ENCODE measurements at regions of chr11 and their contacts with region 1.

Region 1: GRCh38 chr11:14413307-14414069 is 54.5 kb upstream of the RRAS2 start:
- DNase-seq: peak in 1 of 2 donors; percentile 59
- ATAC-seq: peak; percentile 57
- H3K4me3 ChIP-seq: no peak overlapping the region
- H3K27ac ChIP-seq: peak overlapping the region; percentile 15 to 29
- H3K4me1 ChIP-seq: peaks cover 2 to 5% of the 10 kb centered on the region in 2 donors
- H3K27me3 ChIP-seq: no peaks in the 10 kb centered on the region

Region 2: DNA sequence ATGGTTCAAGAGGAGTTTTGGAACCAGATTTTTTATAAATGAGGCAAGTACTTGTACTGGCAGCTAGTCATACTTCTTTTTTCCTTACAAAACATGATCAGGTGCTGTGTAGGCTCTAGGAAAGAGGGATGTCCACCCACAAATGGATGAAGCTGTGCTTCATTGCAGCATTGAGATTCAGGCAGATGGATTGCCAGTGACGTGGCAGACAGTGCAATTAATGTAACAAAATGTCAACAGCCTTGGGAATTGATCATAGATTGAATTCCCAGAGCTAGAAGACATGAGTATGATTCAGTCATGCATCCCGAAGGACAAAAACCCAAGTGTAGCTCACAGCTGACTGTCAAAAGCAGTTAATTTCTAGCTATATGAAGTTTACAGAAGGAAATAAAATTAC is 1503.6 kb before region 1 on chr11:
- intact Hi-C with region 1: no loop called
- DNase-seq: no peak
- ATAC-seq: no peak
- H3K4me3 ChIP-seq: no peak overlapping the region
- H3K27ac ChIP-seq: no peak overlapping the region
- H3K4me1 ChIP-seq: no peaks in the 10 kb centered on the region
- H3K27me3 ChIP-seq: no peaks in the 10 kb centered on the region

Region 3: GRCh38 chr11:14336507-14337503 is 76.7 kb before region 1 on chr11:
- intact Hi-C with region 1: no loop called
- DNase-seq: no peak
- ATAC-seq: no peak
- H3K4me3 ChIP-seq: no peak overlapping the region
- H3K27ac ChIP-seq: no peak overlapping the region
- H3K4me1 ChIP-seq: peaks cover 0 to 11% of the 10 kb centered on the region in 2 donors
- H3K27me3 ChIP-seq: no peaks in the 10 kb centered on the region

Region 4: DNA sequence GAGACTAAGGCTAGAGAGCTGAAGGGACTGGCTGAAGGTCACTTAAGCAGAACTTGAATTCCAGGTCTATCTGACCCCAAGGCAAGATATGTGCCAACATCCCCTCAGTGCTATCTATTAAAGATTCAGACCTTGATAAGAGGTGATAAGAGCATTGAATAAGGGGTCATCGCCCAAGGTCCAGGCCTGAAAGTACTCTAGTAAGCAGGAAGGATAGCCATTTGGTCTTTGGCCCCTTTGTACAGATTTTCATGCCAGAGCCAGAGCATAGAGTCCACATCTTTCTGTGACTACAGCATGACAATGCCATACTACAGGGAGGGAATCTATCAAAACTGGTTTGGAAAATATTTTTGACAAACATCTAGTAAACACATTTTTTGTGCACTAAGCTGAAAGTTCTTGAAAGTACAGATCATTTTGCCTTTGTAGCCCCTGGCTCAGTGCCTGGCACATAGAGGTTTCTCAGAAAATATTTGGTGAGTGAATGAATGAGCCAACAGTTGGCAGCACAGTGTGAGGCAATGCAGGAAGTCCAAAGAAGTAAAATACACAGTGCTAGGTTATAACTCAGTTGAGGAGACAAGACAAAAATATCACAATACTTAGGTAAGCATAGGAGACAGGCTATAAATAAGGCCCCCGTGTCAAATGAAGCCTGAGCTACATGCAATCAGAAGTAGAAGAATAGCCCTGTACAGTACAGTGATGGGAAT is 39.4 kb before region 1 on chr11:
- intact Hi-C with region 1: loop called in 1 of 2 experiments (anchors 5 kb)
- DNase-seq: peak; percentile 83 to 85
- ATAC-seq: peak; percentile 81
- H3K4me3 ChIP-seq: no peak overlapping the region
- H3K27ac ChIP-seq: peak overlapping the region; percentile 91 to 95
- H3K4me1 ChIP-seq: peaks cover 10 to 14% of the 10 kb centered on the region in 2 donors
- H3K27me3 ChIP-seq: no peaks in the 10 kb centered on the region

Region 5: GRCh38 chr11:14519917-14520746 is 106.6 kb after region 1 on chr11 and contains the start of gene PSMA1:
- intact Hi-C with region 1: no loop called
- DNase-seq: peak; percentile 98
- ATAC-seq: peak; percentile 100
- H3K4me3 ChIP-seq: peak within 1 kb of the TSS; percentile 60 to 95
- H3K27ac ChIP-seq: peak within 1 kb of the TSS in 1 of 2 donors; percentile 91
- H3K4me1 ChIP-seq: peaks cover 0 to 4% of the 10 kb centered on the region in 2 donors
- H3K27me3 ChIP-seq: no peaks in the 10 kb centered on the region
- total RNA-seq, gene PSMA1: 117 to 122 TPM